OCI-LY7 (cell line): ENCODE measurements at regions of chr10 and their contacts with region 1.

Region 1: DNA sequence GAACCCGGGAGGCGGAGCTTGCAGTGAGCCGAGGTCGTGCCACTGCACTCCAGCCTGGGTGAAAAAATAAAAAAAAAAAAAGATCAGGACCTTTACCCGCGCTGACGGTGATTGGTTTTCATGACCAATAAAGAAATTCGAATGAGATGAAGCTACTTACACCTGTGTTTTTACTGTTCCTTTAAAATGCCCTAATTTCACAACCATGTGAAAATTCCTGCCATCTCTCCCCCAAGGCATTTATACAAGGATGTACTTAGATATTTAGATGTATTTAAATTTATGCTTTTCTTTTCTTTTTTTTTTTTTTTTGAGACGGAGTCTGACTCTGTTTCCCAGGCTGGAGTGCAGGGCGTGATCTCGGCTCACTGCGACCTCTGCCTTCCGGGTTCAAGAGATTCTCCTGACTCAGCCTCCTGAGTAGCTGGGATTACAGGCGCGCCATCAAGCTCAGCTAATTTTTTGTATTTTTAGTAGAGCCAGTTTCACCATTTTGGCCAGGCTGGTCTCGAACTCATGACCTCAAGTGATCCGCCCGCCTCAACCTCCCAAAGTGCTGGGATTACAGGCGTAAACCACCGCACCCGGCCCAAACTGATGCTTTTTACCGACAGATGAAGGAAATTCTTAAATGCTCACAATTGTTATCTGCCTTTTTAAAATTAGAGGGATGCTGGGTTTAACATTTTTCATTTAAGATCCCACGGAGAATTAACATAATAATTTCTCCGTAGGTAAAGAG is 3.1 kb upstream of the PHYH start:
- DNase-seq: no peak
- H3K4me3 ChIP-seq: peak overlapping the region; percentile 69
- H3K27ac ChIP-seq: no peak overlapping the region
- H3K4me1 ChIP-seq: peaks cover 18% of the 10 kb centered on the region
- CTCF ChIP-seq: no peak

Region 2: DNA sequence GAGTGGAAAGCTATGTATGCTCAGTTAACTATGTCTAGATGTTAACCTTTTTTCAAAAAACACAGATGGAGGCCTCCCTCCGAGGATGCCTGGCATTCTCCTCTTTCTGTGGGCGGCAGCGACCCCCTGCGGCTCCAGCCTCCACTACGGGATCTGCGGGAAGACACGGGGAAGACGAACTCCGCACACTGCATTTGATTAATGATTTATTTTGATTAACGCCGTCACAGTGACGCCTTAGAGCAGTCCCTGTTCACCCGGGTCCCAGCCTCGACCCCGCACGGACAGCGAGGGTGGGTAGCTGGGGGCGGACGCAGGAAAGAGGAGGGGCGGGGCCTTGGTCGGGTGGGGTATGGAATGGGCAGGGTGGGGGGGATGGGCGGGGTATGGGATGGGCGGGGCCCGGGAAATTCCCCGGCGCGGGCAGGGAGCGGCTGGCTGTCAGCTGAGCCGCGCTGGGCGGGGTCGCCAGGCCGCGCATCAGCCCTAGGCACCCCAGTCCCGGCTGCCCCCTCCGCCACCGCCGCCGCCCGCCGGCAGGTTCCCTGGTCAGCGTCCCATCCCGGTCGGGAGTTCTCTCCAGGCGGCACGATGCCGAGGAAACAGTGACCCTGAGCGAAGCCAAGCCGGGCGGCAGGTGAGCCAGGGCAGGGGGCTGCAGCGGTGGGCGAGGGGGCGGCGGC is 203.2 kb before region 1 on chr10 and contains the start of gene OPTN:
- CTCF ChIA-PET with region 1: no interaction called
- POLR2A ChIA-PET with region 1: interaction called, 4 read pairs
- intact Hi-C with region 1: loop called (anchors 1 kb)
- DNase-seq: peak; percentile 27
- H3K4me3 ChIP-seq: peak within 1 kb of the TSS; percentile 64
- H3K27ac ChIP-seq: no peak within 1 kb of the TSS
- H3K4me1 ChIP-seq: peaks cover 12% of the 10 kb centered on the region
- CTCF ChIP-seq: peak; percentile 29; the same call in 1 of the 2 replicates
- total RNA-seq, gene OPTN: 0.33 and 0.60 TPM in 2 replicates

Region 3: GRCh38 chr10:13115832-13116803 is 186.9 kb before region 1 on chr10:
- CTCF ChIA-PET with region 1: no interaction called
- POLR2A ChIA-PET with region 1: no interaction called
- intact Hi-C with region 1: no loop called
- DNase-seq: no peak
- H3K4me3 ChIP-seq: no peak overlapping the region
- H3K27ac ChIP-seq: no peak overlapping the region
- H3K4me1 ChIP-seq: peaks cover 10% of the 10 kb centered on the region
- CTCF ChIP-seq: no peak

Region 4: DNA sequence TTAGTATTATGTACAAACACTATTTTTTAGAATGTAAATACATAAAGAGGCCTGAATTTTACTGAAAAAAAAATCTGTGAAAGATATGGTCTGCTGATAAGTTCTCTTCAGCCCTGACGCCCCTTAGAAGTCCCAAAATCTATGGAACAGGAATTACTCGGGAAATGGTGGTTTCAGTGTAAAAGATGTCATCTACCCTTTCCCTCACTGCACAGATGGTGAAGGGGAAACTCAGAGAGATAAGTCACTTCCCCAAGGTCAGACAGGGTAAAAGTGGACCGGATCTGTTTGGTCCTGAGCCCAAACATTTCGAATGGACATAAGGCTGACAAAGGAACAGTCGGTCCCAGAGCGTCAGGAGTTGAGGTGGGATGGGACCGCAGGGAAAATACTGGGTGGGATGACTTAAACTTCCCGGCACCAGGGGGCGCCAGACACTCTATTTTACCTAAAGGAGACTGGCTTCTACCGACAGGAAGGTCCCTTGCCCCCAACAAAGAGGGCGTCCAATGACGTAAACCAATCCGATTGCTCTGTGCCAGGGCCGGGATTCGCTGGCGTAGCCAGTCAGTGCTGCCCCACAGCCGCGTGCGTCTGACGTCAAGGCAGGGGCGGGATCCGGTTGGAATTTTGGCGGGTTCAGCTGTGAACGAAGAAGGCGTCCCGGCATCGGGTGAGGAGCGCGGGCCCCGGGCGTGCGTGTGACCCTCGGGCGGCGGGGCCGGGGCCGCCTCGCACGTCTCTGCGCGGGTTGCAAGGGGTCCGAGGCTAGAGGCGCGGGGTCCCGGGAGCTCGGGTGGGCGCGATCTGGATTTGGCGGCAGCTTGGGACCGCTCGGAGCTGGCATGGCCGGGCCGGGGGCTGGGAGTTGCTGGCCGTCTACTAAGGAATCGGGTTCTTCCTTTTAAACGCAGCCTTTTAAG is 141.8 kb before region 1 on chr10 and contains the start of gene MCM10:
- CTCF ChIA-PET with region 1: interaction called, 3 read pairs
- POLR2A ChIA-PET with region 1: interaction called, 6 read pairs
- intact Hi-C with region 1: loop called (anchors 1 kb)
- DNase-seq: peak; percentile 100
- H3K4me3 ChIP-seq: peak within 1 kb of the TSS; percentile 80
- H3K27ac ChIP-seq: peak within 1 kb of the TSS; percentile 24
- H3K4me1 ChIP-seq: peaks cover 30% of the 10 kb centered on the region
- CTCF ChIP-seq: peak; percentile 90
- total RNA-seq, gene MCM10: 56.9 and 63.9 TPM in 2 replicates

Region 5: DNA sequence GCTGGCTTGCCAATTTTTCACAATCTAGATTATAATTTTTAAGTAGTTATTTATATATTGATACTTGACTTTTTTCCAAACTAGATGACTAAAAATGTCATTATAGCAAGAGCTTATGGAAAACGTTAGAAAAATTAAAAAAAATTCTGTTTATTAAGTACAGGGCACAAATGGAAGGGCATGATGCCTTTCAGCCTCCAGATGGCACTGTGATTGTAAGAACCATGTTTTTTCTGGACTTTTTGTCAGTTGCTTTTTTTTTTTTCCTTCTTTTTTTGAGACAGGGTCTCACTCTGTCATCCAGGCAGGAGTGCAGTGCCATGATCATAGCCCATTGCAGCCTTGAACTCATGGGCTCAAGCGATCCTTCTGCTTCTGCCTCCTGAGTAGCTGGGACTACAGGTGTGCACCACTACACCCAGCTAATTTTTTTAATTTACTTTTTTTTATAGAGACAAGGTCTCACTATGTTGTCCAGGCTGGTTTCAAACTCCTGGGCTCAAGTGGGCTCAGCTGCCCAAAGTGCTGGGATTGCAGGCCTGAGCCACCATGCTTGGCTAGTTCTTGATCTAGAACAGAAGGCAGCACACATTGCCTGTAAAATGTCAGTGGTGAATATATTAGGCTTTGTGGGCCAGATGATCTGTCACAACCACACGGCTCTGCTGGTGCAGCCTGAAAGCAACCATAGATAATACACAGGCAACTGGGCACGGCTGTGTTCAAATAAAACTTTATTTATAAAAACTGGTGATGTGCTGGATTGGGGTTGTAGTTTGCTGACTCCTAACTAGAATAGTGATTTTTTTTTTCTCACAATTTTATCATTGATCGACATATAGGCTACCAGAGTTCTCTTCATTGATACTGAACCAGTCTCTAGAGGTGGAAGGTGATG is 96.2 kb before region 1 on chr10:
- CTCF ChIA-PET with region 1: interaction called, 4 read pairs
- POLR2A ChIA-PET with region 1: interaction called, 4 read pairs
- intact Hi-C with region 1: loop called (anchors 2 kb)
- DNase-seq: peak; percentile 34
- H3K4me3 ChIP-seq: no peak overlapping the region
- H3K27ac ChIP-seq: no peak overlapping the region
- H3K4me1 ChIP-seq: no peaks in the 10 kb centered on the region
- CTCF ChIP-seq: peak; percentile 69

Region 6: GRCh38 chr10:13219685-13220670 is 83.0 kb before region 1 on chr10:
- CTCF ChIA-PET with region 1: no interaction called
- POLR2A ChIA-PET with region 1: no interaction called
- intact Hi-C with region 1: loop called (anchors 1 kb)
- DNase-seq: peak; percentile 79
- H3K4me3 ChIP-seq: no peak overlapping the region
- H3K27ac ChIP-seq: no peak overlapping the region
- H3K4me1 ChIP-seq: peaks cover 11% of the 10 kb centered on the region
- CTCF ChIP-seq: peak; percentile 71

Region 7: DNA sequence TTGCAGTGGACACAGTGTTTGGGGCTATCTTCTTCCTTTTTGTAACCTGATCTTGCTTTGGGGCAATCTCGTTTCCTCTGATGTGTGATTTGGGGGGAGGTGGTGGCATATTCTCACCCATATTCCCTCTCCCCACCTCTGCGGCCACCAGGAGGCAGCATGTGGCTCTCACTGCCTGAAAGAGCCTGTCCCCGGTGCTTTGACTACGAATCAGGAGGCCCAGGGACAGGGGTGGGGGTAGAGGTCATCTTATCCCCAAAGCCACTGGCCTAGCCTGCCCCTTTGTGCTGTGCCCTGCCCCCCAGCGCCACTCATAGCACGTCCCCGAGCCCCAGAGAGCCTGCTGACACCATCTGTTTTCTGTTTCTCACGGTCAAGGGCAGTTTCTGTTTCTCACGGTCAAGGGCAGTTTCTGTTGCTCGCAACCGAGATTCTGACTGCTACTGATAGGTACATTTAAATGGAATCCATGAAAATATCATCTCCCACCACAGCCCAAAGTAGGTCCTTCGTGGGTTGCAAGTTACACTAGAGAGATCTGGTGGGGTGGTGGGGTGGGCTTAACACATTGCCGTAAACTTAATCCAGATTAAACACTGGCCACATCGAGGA is 31.3 kb before region 1 on chr10:
- CTCF ChIA-PET with region 1: interaction called, 5 read pairs
- POLR2A ChIA-PET with region 1: interaction called, 6 read pairs
- intact Hi-C with region 1: loop called (anchors 1 kb)
- DNase-seq: peak; percentile 78
- H3K4me3 ChIP-seq: peak overlapping the region; percentile 41
- H3K27ac ChIP-seq: peak overlapping the region; percentile 97
- H3K4me1 ChIP-seq: peaks cover 50% of the 10 kb centered on the region
- CTCF ChIP-seq: peak; percentile 81

Region 8: DNA sequence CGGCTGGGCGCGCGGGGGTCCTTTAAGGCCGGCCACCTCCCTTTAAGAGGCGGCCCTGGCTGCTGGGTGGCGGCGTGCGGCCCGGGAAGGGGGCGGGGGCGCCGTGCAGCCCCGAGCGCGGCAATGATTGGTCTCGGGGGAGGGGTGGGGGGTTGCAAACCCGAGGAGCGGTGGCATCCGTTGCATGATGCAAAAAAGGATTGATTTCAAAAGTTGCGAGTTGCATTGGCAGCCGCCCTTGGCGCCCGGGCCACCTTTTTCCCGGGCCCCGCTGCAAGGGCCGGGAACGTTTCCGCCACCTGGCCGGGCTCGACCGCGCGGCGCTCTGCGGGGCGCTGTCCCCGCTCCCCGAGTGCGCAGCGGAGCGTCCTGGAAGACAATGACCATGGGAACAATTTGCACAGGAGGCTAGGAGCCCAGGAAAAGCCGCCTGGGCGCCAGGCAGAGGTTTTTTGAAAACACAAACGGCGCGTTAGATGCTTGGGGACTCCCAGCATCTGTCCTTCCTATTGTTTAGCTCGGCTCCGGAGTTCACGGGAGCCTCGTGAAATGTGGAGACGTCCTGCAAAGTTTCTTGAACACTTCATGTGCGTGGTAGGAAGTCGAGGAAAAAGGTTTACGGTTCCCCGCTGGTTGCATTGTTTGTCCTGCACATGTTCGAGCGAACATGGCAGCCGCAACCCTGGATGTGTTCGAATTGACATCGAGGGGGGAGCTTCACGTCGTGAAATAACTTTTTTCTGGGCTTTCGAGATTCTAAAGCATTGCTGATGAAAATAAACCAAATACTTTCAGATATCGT is 45.4 kb after region 1 on chr10 and contains the start of gene SEPHS1:
- CTCF ChIA-PET with region 1: no interaction called
- POLR2A ChIA-PET with region 1: no interaction called
- intact Hi-C with region 1: loop called (anchors 2 kb)
- DNase-seq: peak; percentile 92
- H3K4me3 ChIP-seq: peak within 1 kb of the TSS; percentile 86
- H3K27ac ChIP-seq: peak within 1 kb of the TSS; percentile 95
- H3K4me1 ChIP-seq: peaks cover 44% of the 10 kb centered on the region
- CTCF ChIP-seq: 0 out of 2 replicates have a peak, but pooled peaks have one; percentile 36
- total RNA-seq, gene SEPHS1: 72.7 and 115 TPM in 2 replicates

Region 9: GRCh38 chr10:13594641-13595040 is 291.7 kb after region 1 on chr10:
- CTCF ChIA-PET with region 1: no interaction called
- POLR2A ChIA-PET with region 1: no interaction called
- intact Hi-C with region 1: no loop called
- DNase-seq: no peak
- H3K4me3 ChIP-seq: no peak overlapping the region
- H3K27ac ChIP-seq: no peak overlapping the region
- H3K4me1 ChIP-seq: no peaks in the 10 kb centered on the region
- CTCF ChIP-seq: no peak

Region 10: DNA sequence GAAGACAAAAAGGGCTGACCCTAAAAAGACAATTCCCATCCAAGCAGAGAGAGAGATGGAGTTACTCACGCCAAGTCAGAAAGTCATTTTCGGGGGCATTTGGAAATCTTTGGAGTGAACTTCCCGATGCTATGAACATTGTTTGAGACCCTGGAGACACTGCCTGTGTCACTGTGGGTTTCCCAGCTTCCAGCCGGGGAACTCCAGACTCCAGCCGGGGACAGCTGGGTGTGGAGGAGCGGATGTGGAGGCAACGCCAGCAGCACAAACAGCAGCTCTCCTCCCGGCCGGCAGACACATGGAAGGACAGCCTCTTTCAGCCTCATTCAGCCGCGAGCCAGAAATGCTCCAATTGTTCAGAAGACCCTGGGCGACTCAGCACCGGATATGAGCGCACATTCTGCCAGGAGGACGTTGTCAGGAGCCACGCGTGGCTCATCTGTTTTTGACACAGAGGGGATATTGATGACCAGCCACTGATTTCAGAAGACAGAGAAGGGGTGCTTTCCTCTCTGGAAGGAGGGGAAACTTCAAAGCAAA is 381.3 kb after region 1 on chr10:
- CTCF ChIA-PET with region 1: no interaction called
- POLR2A ChIA-PET with region 1: no interaction called
- intact Hi-C with region 1: no loop called
- DNase-seq: no peak
- H3K4me3 ChIP-seq: no peak overlapping the region
- H3K27ac ChIP-seq: no peak overlapping the region
- H3K4me1 ChIP-seq: no peaks in the 10 kb centered on the region
- CTCF ChIP-seq: no peak